Activated naive CD4-positive, alpha-beta T cell treated with anti-CD3 and anti-CD28 coated beads for 36 hours (primary cell): ENCODE measurements at regions of chr5 and their contacts with region 1.

Region 1: DNA sequence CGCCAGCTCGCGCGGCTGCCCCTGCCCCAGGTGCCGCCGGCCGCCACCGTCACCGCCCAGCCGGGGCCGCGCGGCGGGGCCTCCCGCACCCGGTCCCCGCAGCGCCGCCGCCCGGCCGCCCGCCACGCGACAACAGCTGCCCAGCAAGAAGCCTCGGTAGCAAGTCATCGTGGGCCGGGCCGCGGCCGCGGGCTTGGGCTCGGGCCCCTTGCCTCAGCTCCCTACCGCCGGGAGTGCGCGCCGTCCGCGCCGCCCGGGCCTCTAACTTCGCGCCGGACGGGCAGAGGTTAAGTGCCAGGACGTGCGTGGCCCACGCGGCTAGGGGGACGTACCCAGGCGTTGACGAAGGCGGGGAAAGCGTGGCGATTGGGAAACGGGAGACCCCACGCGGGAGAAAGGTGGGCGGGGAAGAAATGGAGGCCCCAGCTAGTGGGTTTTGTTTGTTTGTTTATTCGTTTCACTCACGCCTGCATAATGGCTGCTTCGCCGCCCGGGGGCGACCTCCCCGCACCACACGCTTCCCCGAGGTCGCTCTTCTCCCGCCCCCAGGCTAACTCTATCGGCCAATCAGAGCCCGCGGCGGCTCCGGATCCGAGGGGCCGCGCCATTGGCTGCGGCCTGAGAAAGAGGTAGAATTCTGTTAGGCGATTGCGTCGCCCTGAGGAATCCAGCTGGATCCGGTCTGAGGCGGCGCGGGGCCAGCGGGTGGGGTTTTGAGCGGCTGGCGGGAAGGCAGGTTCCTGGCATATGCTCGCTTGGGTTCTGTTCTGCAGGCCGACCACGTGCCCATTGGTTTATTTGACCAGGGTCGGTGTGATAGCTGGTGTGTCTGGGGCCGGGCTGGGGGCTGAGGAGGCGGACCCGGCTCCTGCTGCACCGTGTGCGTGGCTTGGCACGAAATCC is at the start of gene NADK2:
- DNase-seq: peak; percentile 96
- H3K4me3 Mint-ChIP-seq: peak within 1 kb of the TSS; percentile 80
- H3K27ac Mint-ChIP-seq: peak within 1 kb of the TSS; percentile 90
- H3K4me1 Mint-ChIP-seq: peaks cover 42% of the 10 kb centered on the region
- H3K27me3 Mint-ChIP-seq: no peaks in the 10 kb centered on the region
- total RNA-seq, gene NADK2: 19.9 to 20.0 TPM

Region 2: GRCh38 chr5:34929150-34929719 is 1312.6 kb before region 1 on chr5 and contains the start of gene DNAJC21:
- CTCF ChIA-PET with region 1: no interaction called
- intact Hi-C with region 1: loop called (anchors 5 kb)
- DNase-seq: peak; percentile 99
- H3K4me3 Mint-ChIP-seq: peak within 1 kb of the TSS; percentile 94
- H3K27ac Mint-ChIP-seq: peak within 1 kb of the TSS; percentile 94
- H3K4me1 Mint-ChIP-seq: peaks cover 37% of the 10 kb centered on the region
- H3K27me3 Mint-ChIP-seq: no peaks in the 10 kb centered on the region
- total RNA-seq, gene DNAJC21: 59.1 to 62.1 TPM

Region 3: GRCh38 chr5:35672995-35673394 is 568.9 kb before region 1 on chr5:
- CTCF ChIA-PET with region 1: no interaction called
- intact Hi-C with region 1: loop called (anchors 5 kb)
- DNase-seq: peak; percentile 73
- H3K4me3 Mint-ChIP-seq: no peak overlapping the region
- H3K27ac Mint-ChIP-seq: peak overlapping the region; percentile 75
- H3K4me1 Mint-ChIP-seq: peaks cover 63% of the 10 kb centered on the region
- H3K27me3 Mint-ChIP-seq: no peaks in the 10 kb centered on the region

Region 4: DNA sequence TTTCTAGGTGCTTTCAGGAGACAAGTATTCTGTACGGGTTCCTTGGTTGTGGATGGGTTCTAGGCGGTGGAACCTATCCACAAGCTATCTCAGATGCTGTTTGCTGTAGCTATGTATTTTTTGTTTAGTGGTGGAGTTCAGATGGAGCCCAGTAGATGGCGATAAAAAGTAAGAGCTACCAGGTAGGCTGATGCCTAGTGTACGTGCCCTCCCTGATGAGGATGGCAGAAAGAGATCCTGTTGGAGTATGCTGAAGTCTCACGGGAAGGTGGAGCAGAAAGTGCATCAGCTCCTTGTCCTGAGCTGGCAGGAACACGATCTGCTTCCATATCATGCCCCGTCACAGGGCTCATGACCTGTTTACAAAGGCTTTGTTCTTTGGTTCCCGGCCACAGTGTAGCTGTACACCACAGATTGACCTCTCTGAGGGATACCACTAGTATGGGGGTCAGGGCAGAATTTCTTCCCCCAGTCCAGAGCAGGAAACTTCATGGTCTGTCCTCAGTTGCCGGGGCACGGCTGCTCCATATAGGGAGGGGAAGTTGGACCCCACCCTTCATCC is 162.6 kb before region 1 on chr5:
- CTCF ChIA-PET with region 1: interaction called, 3 read pairs
- intact Hi-C with region 1: loop called (anchors 1 kb)
- DNase-seq: peak; percentile 47
- H3K4me3 Mint-ChIP-seq: no peak overlapping the region
- H3K27ac Mint-ChIP-seq: no peak overlapping the region
- H3K4me1 Mint-ChIP-seq: no peaks in the 10 kb centered on the region
- H3K27me3 Mint-ChIP-seq: peaks cover 11% of the 10 kb centered on the region

Region 5: DNA sequence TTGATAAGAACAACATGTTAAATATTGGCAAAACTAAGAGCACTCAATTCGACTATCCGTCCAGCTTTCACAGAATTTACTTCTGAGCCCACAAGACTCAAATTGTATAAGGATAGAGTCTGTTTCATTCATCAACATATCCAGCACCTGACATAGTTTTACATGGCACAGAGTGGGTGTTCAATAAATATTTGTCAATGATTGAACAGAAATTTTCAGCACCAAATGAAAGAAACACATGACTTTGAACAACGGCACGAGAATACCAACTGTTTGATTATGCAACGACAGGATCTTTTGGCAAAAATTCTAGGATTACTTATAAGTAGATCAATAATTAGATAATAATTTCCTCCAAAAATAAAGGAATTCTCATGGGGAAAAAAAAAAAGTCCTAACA is 48.1 kb before region 1 on chr5:
- CTCF ChIA-PET with region 1: no interaction called
- intact Hi-C with region 1: no loop called
- DNase-seq: no peak
- H3K4me3 Mint-ChIP-seq: no peak overlapping the region
- H3K27ac Mint-ChIP-seq: no peak overlapping the region
- H3K4me1 Mint-ChIP-seq: no peaks in the 10 kb centered on the region
- H3K27me3 Mint-ChIP-seq: no peaks in the 10 kb centered on the region

Region 6: DNA sequence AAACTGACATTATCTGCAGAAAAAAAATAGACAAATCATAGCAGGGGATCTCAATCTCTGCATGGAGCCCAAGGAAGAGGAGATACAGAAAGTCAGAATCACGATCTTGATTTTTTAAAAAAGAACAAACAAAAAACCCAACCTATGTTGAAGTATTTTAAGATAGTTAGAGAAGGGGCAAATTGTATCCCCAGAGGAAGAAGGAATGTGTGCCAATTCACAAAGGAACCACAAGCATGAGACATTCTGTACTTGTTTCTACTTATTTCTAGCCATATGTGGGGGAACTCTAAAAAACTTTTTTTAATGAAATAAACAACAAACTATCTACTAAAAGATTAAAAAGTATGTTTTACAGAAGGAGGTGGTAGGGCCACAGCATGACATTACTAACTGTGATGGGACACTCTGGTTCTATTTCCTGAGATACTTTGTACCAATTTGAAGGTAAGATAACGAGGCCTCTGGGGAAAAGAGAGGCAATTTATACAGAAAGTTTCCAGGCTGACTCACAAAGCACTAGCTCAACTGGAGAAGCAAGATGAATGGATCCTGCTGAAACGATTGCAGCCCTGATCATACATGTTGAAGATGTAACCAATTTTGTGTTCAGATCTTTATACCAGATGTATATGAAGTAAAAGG is 37.3 kb after region 1 on chr5:
- CTCF ChIA-PET with region 1: no interaction called
- intact Hi-C with region 1: no loop called
- DNase-seq: no peak
- H3K4me3 Mint-ChIP-seq: no peak overlapping the region
- H3K27ac Mint-ChIP-seq: no peak overlapping the region
- H3K4me1 Mint-ChIP-seq: peaks cover 5% of the 10 kb centered on the region
- H3K27me3 Mint-ChIP-seq: peaks cover 5% of the 10 kb centered on the region

Region 7: DNA sequence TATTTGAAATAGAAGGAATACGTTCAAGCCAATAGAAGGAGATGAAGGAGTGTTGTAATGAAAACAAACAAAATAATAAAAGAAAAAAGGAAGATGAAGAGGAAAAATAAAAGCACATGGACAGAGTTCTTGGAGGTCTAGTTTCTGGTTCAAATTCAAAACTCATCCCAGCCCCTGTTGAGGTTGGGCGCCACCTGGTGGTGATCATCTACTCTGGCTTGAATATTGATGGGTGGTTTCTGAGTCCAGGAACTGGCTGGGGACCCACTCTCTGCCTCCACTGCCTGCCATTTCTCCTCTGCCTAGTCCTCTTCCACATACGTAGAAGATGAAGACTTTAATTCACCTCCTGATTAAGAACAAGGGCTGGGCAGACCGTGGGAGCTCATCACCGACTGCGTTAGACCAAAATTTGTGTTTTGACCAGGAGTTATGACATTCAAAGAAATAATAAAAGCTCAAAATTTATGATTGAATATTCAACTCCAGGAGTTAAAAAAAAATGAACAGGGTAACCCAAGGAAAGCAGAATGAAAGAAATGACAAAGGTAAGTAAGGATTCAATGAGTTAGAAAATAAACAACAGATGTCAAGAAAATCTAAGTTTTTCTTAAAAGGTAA is 265.6 kb after region 1 on chr5:
- CTCF ChIA-PET with region 1: no interaction called
- intact Hi-C with region 1: loop called (anchors 1 kb)
- DNase-seq: peak; percentile 87
- H3K4me3 Mint-ChIP-seq: no peak overlapping the region
- H3K27ac Mint-ChIP-seq: no peak overlapping the region
- H3K4me1 Mint-ChIP-seq: no peaks in the 10 kb centered on the region
- H3K27me3 Mint-ChIP-seq: peaks cover 5% of the 10 kb centered on the region

Region 8: DNA sequence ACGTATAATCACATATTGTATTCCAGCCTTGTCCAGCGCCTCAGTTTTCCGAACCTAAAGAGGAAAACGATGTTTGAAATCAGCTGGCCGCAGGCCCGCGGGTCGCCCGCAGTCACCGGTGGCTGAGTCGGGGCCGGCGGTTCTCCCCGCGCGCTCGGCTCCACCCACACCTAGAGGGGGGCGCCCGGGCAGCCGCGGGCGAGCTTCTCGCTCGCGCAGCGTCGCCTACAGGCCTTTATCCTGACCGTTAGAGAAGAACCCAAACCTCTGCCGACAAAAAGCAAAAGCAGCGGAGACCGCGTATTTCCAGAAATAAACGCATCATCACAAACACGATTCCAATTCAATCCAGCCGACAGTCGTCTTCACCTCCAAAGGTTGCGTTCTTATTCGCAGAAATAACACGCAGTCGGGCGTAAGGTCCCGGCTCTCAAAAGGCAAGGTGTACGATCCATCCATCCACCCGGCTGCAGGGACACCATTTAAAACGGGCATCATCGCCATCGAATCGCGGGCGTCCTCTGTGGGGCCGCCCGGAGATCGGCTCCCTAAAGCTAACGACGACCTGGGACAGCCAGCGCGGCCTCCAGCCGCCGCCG is 634.0 kb after region 1 on chr5:
- CTCF ChIA-PET with region 1: no interaction called
- intact Hi-C with region 1: loop called (anchors 1 kb)
- DNase-seq: peak; percentile 77
- H3K4me3 Mint-ChIP-seq: peak overlapping the region; percentile 83
- H3K27ac Mint-ChIP-seq: peak overlapping the region; percentile 96
- H3K4me1 Mint-ChIP-seq: peaks cover 25% of the 10 kb centered on the region
- H3K27me3 Mint-ChIP-seq: no peaks in the 10 kb centered on the region

Region 9: DNA sequence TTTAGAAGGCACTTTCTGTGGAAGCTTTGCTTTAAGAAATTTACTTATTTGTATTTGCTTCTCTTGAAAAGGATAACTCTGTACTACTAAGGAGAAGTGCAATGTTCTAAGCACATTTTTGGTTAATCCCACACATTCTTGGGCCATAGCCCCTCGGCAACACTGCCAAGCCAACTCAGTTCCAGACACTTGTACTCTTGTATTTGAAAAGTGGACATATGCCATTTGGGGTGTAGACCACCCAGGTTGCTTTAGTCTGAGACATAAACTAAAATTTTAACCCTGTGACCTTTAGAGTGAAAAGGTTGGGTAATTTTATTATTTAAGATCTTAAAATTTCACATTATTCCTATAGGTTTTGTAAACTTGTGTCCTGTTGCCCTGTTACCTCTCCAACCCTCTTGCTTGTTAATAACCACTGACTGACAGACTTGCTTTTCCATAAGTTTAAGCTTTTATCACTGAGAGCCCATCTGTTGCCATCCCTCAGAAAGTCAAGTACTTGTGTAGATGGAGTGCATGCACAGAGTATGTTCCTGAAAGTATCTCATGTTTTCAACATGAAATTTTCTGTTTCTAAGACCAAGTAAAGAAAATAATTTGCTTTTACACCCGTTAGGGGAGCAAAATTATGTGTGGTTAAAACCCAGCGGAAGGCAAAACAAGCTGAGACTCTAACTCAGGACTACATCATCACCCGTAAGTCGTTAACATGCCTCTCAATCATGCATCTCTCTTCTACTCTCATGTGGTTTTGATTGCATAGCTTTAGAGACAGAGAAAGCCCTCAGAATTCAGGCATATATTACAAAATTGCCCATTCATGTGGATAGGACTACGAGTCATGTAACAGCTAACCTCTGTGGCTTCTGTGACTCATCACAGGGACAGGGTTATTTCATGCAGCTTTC is 1480.6 kb after region 1 on chr5:
- CTCF ChIA-PET with region 1: no interaction called
- intact Hi-C with region 1: loop called (anchors 5 kb)
- DNase-seq: peak; percentile 68
- H3K4me3 Mint-ChIP-seq: no peak overlapping the region
- H3K27ac Mint-ChIP-seq: peak overlapping the region; percentile 50
- H3K4me1 Mint-ChIP-seq: peaks cover 26% of the 10 kb centered on the region
- H3K27me3 Mint-ChIP-seq: no peaks in the 10 kb centered on the region